Activated T-helper 2 cell treated with anti-CD3 and anti-CD28 coated beads, Interferon-gamma antibody, Interleukin-2, Interleukin-4, amounts not matched to agents 10 μg/mL and 5 μg/mL and 100 μg/mL, durations not matched to agents 14 hours and 24 hours and 36 hours (primary cell): ENCODE measurements at regions of chr1 and their contacts with region 1.

Region 1: GRCh38 chr1:205812878-205813754 is at the start of gene SLC41A1:
- DNase-seq: peak; percentile 83
- H3K4me3 Mint-ChIP-seq: peak within 1 kb of the TSS; percentile 93
- H3K27ac Mint-ChIP-seq: peak within 1 kb of the TSS; percentile 86
- H3K4me1 Mint-ChIP-seq: peaks cover 45% of the 10 kb centered on the region
- H3K27me3 Mint-ChIP-seq: no peaks in the 10 kb centered on the region
- total RNA-seq, gene SLC41A1: 46.9 and 48.5 TPM in 2 replicates

Region 2: GRCh38 chr1:205775015-205775716 is 38.0 kb before region 1 on chr1 and contains the start of gene RAB29:
- intact Hi-C with region 1: loop called (anchors 1 kb)
- DNase-seq: peak; percentile 81
- H3K4me3 Mint-ChIP-seq: peak within 1 kb of the TSS; percentile 96
- H3K27ac Mint-ChIP-seq: peak within 1 kb of the TSS; percentile 93
- H3K4me1 Mint-ChIP-seq: peaks cover 51% of the 10 kb centered on the region
- H3K27me3 Mint-ChIP-seq: peaks cover 4% of the 10 kb centered on the region
- total RNA-seq, gene RAB29: 26.2 and 26.7 TPM in 2 replicates

Region 3: DNA sequence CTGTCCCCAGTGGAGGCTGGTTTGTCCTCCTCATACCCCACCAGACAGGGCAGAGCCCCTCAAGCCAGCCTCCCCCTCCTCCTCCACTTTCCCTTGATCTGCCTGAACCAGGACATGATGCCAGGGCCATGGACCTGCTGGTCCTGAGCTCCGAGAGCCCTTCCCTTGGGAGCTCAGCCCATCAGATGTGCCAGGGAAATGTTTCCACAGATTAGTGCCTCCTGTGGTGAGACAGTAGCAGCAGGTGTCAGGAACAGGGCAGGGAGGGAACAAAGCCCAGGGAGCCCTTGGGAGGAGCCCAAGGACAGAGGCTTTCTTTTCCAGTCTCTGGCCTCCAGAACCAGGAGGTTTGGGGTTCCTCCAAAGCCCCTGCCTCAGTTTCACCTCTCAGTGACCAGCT is 14.5 kb after region 1 on chr1:
- intact Hi-C with region 1: loop called (anchors 1 kb)
- DNase-seq: no peak
- H3K4me3 Mint-ChIP-seq: no peak overlapping the region
- H3K27ac Mint-ChIP-seq: no peak overlapping the region
- H3K4me1 Mint-ChIP-seq: peaks cover 25% of the 10 kb centered on the region
- H3K27me3 Mint-ChIP-seq: no peaks in the 10 kb centered on the region

Region 4: DNA sequence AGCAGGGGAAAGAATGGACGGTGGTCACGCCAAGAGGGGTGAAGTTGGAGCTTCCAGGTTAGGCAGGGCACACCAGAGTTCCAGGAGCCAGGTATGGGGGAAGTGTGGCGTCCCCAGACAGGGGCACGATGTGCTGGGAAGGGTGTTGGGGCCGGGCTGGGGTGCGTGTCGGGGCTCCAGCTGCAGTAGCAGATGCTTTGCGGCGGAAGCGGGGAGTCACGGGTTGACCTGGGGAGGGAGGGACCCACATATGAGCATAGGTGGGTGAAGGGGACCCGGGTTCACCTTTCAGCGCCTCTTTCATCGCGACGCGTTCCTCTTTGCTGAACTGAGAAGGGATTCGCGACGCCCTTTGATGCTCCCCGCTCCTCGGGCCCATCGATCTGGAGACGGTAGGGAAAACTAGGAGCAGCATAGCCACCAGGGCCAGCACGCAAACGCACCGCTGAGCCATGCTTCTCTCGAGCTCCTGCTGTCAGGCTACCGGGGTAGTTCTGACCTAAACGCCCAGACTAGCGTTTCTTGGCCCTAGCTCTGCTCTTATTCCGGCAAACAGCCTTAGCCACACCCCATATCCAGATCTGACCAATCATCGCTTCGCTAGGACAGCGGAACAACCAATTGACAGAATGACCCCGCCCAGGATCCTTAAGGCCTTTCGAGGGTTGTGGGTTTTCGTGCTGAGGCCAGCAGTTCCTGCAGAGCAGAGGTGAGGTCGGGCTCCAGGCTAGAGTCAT is 36.7 kb after region 1 on chr1 and contains the start of gene PM20D1:
- intact Hi-C with region 1: loop called (anchors 5 kb)
- DNase-seq: peak; percentile 89
- H3K4me3 Mint-ChIP-seq: peak within 1 kb of the TSS; percentile 86
- H3K27ac Mint-ChIP-seq: peak within 1 kb of the TSS; percentile 82
- H3K4me1 Mint-ChIP-seq: peaks cover 20% of the 10 kb centered on the region
- H3K27me3 Mint-ChIP-seq: no peaks in the 10 kb centered on the region
- total RNA-seq, gene PM20D1: 0.57 and 0.78 TPM in 2 replicates